ENCODE measurements at regions of chr3 and their contacts with region 1.

Region 1: DNA sequence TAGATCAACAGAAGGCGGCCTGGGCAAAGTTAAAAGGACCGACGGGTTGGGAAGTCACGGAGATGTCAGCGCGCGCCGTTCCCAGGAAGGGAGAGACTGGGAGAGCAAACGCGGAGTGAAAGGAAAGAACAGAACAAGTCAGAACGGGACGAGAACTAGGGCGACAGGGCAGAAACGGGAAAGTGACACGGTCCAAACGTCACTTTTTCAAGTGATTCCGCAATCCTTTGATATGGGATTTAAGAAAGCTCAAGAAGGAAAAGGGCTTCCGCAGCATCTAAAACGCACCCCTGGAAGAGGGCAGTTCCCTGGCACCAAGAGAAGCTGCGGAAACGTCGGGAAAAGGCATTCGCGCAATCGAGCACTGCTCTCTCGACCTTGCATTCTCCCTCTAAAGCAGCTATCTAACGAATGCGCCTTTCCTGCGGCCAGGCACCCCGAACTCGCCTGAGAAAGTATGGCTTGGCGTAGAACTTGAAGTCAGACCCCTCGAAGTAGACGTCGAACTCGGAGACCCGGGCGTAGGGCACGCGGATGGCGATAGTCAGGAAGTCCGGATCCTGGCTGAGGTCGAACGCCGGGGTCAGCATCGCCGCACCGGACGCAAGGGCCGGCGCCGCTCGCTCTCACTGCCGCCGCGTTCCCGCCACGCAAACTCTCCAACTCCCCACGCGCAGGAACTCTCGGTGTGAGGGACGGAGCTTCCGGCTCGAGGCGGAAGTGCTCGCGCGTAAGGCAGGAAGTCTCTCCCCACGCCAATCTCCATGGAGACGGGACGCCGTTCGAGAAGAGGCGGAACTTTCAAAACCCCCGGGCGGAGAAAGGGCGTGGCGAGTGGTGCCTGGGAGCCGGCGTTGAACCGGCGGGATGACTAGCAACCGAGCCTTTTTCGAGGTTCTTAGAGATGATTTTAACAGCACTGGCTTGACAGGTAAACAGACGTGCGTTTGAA is at the start of gene SHQ1:
- DNase-seq: peak; percentile 98
- ATAC-seq: peak; percentile 90
- H3K4me3 Mint-ChIP-seq: peak within 1 kb of the TSS; percentile 89
- H3K27ac Mint-ChIP-seq: peak within 1 kb of the TSS; percentile 84
- H3K4me1 Mint-ChIP-seq: peaks cover 51% of the 10 kb centered on the region
- H3K27me3 Mint-ChIP-seq: no peaks in the 10 kb centered on the region
- CTCF ChIP-seq: no peak
- total RNA-seq, gene SHQ1: 29.8 to 31.4 TPM

Region 2: GRCh38 chr3:72814308-72814707 is 33.7 kb before region 1 on chr3:
- CTCF ChIA-PET with region 1: no interaction called
- POLR2A ChIA-PET with region 1: no interaction called
- intact Hi-C with region 1: no loop called
- DNase-seq: no peak
- ATAC-seq: no peak
- H3K4me3 Mint-ChIP-seq: no peak overlapping the region
- H3K27ac Mint-ChIP-seq: no peak overlapping the region
- H3K4me1 Mint-ChIP-seq: peaks cover 30% of the 10 kb centered on the region
- H3K27me3 Mint-ChIP-seq: no peaks in the 10 kb centered on the region
- CTCF ChIP-seq: no peak

Region 3: DNA sequence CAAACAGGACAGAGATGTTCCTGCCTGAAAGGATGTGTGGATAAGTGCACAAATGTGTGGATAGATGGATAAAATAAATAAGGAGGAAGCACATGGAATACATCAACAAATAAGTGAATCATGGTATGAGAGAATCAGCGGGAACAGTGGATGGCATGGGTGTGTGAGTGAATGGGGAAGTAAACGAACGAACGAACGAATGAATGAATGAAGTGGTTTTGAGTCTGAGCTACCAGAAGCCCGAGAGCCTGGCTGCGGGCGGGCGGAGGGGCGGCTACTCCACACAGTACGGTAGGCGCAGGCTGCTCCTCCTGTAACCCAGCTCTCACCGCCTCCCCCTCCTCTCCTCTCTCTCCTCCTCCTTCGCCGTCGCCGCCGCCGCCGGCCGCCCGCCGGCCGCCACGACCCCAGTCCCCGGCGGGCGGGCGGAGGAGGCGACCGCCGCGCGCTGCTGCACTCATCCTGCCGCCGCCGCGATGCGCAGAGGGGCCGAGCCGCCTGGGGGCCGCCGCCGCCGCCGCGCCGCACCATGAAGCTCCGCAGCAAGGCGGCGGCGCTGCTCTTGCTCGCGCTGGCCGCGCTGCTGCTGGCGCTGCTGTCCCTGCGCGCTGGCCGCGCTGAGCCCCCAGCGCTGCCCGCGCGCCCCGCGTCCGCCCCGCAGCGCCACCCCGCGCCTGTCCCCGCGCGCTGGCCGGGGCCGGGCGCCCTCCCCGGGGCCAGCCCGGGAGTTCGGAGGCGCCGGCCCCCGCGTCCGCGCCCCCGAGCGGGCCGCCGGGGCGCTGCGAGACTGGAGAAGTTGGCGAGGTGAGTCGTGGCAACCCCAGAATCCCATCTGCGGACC is 39.9 kb after region 1 on chr3 and contains the start of gene GXYLT2:
- CTCF ChIA-PET with region 1: interaction called, 15 read pairs
- POLR2A ChIA-PET with region 1: interaction called, 5 read pairs
- intact Hi-C with region 1: no loop called
- DNase-seq: peak; percentile 48
- ATAC-seq: peak; percentile 82
- H3K4me3 Mint-ChIP-seq: peak within 1 kb of the TSS; percentile 68
- H3K27ac Mint-ChIP-seq: no peak within 1 kb of the TSS
- H3K4me1 Mint-ChIP-seq: peaks cover 16% of the 10 kb centered on the region
- H3K27me3 Mint-ChIP-seq: peaks cover 68% of the 10 kb centered on the region
- CTCF ChIP-seq: no peak
- total RNA-seq, gene GXYLT2: 0.11 to 0.92 TPM

Region 4: GRCh38 chr3:73086071-73086494 is 238.1 kb after region 1 on chr3:
- CTCF ChIA-PET with region 1: interaction called, 56 read pairs
- POLR2A ChIA-PET with region 1: no interaction called
- intact Hi-C with region 1: loop called (anchors 5 kb)
- DNase-seq: peak; percentile 64
- ATAC-seq: peak; percentile 67
- H3K4me3 Mint-ChIP-seq: no peak overlapping the region
- H3K27ac Mint-ChIP-seq: no peak overlapping the region
- H3K4me1 Mint-ChIP-seq: peaks cover 8% of the 10 kb centered on the region
- H3K27me3 Mint-ChIP-seq: no peaks in the 10 kb centered on the region
- CTCF ChIP-seq: peak; percentile 94